Dorsolateral prefrontal cortex (tissue), 120 donors: ENCODE measurements at regions of chr2 and their contacts with region 1.

Region 1: DNA sequence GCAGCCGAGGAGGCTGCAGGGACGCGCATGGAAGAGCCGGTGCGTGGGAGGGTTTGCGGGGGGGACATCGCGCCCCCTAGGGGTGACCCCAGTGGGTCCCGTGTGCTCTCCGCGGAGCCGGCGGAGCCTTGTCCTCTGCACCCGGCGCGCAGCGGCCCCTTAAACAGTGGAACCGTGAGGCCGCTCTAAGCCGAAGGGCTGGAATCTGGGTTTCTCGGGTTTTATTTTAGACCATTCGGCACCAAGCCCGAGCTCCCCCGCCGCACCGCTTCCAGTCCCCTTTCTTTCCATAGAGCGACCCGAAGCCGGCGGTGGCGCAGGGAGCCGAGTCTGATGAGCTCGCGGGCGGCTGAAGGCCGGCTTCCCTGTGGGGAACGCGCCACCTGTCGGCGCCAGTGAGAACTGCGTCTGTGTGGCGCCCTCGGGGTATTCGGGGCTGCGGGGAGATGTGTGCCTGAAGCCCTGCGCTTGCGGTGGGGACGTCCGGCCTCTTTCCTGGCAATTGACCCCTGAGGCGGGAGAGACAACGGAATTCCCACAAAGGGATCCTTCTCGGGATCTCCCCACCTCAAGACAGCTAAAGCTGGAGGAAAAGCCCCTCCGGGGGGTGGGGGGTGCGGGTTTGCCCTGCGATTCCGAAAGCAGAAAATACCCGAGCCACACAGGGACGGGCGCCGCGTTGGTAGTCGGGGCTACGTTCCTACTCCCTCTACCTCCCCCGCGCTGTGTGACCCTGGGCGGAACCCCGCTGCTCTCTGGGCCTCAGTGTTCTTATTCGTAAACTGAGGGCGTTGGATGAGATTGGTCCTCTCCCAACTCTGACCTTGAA is 8.2 kb upstream of the EN1 start:
- DNase-seq: peak; percentile 45 to 88 (median 69)
- H3K4me3 ChIP-seq: peak overlapping the region in 51 of 59 donors; percentile 4 to 62 (median 36)
- H3K27ac ChIP-seq: no peak overlapping the region
- H3K27me3 ChIP-seq: peaks cover 23 to 100% (median 96%) of the 10 kb centered on the region in 45 donors
- CTCF ChIP-seq: peak; percentile 84 to 100 (median 98)

Region 2: GRCh38 chr2:118046634-118047210 is 808.9 kb before region 1 on chr2:
- intact Hi-C with region 1: loop called in 1 of 2 experiments (anchors 5 kb)
- DNase-seq: no peak
- H3K4me3 ChIP-seq: peak overlapping the region in 5 of 59 donors; percentile 6 to 14 (median 10)
- H3K27ac ChIP-seq: no peak overlapping the region
- H3K27me3 ChIP-seq: peaks cover 0 to 81% (median 37%) of the 10 kb centered on the region in 45 donors
- CTCF ChIP-seq: peak; percentile 48 to 86 (median 66)

Region 3: DNA sequence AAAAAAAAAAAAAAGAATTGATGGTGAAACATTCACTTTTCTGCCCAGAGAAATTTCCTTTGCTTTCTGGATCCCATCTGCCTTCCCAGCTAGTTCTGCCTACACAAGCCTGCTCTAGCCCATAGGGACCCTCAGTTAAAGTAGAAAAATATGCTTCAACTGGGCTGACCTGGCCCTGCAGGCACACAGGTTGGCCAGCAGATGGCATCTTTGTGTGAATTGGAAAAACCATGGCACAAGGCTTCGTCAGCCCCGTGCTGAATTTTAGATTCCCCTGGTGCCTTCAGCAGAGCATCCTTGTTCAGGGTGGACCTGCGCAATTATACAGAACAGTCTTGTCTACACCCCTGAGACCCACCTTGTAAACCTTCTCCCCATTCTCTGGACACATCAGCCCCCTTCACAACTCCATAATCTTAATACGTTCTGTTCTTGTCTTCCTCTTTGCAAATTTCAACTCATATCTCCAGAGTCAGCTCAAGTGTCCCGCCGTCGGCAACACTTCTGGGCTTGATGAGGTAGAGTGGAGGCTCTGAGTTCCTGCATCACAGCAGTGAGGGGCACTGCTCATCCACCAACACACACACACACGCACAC is 652.9 kb before region 1 on chr2:
- intact Hi-C with region 1: loop called in 1 of 2 experiments (anchors 5 kb)
- DNase-seq: peak in 1 of 10 donors; percentile 26
- H3K4me3 ChIP-seq: no peak overlapping the region
- H3K27ac ChIP-seq: no peak overlapping the region
- H3K27me3 ChIP-seq: peaks cover 0 to 54% (median 20%) of the 10 kb centered on the region in 45 donors
- CTCF ChIP-seq: peak; percentile 36 to 77 (median 66)

Region 4: GRCh38 chr2:118221666-118222594 is 633.7 kb before region 1 on chr2:
- intact Hi-C with region 1: loop called (anchors 5 kb)
- DNase-seq: peak in 1 of 10 donors; percentile 16
- H3K4me3 ChIP-seq: no peak overlapping the region
- H3K27ac ChIP-seq: no peak overlapping the region
- H3K27me3 ChIP-seq: peaks cover 13 to 93% (median 77%) of the 10 kb centered on the region in 45 donors
- CTCF ChIP-seq: peak; percentile 31 to 77 (median 60)

Region 5: DNA sequence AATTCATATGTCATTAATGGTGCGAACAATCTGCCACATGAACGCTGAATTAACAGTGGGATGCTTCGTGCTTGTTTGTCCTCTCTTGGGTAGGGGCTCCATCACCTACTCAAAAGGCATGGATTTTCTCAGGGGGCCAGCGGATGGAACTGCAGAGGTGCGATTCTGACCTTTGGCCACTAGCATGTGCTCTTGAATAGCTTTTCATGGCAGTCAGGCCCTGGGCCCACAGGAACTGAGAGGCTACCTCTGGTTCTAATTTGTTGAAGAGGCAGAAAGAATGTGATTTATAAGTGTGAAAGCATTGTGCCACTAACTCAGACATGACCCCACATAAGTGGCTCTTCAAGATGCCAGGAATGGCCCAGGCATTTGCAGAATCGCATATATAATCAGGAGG is 484.1 kb before region 1 on chr2:
- intact Hi-C with region 1: loop called in 1 of 2 experiments (anchors 10 kb)
- DNase-seq: no peak
- H3K4me3 ChIP-seq: no peak overlapping the region
- H3K27ac ChIP-seq: no peak overlapping the region
- H3K27me3 ChIP-seq: peaks cover 0 to 48% (median 5%) of the 10 kb centered on the region in 45 donors
- CTCF ChIP-seq: peak in 30 of 56 donors; percentile 7 to 45 (median 24)